Thyroid gland (tissue), 4 donors: ENCODE measurements at regions of chr7 and their contacts with region 1.

Region 1: DNA sequence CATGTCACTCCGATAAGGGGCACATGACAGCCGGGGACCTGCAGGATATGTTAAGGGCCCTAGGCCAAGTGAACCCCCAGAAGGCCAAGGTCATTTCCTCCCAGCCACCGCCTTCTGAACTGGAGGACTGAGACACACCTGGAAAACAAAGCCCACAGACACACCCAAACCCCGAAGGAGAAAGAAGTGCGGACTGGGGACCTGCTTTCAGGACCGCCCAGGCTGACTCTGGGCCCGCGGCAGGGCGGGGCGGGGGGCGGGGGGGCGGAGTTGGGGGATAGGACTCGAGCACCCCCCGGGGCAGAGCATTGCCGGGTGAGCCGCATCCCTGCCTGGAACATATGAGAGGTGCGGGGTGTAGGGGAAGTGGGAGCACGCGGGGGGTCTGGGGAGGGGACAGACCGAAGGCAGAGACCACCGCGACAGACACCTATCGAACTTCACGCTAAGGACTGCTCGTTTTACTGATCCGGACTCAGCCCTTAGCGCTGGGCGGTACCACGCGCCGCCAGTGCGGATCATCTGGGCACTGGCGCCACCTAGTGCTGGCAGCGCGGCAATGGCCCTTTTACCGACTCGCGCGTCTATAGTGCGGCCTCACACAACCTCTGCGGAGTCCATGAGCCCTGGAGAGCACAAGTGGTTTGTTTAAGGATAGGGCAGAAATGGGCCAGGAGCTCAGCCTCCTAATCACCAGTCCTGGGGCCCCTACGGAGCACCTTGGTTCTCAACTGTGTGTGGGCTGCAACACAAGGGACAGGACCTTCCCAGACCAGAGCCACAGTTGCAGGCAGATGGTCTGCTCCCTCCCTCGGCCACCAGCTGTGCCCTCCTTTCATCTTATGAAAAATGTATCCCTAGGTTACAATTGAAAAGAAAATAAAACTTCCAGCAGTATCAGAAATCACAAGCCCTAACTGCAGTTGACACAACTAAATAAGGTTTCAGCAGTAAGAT is 157.6 kb downstream of the HERPUD2 start:
- DNase-seq: peak; percentile 72 to 79
- H3K4me3 ChIP-seq: peak overlapping the region in 1 of 3 donors; percentile 23
- H3K27ac ChIP-seq: no peak overlapping the region
- H3K4me1 ChIP-seq: peaks cover 0 to 4% of the 10 kb centered on the region in 2 donors
- H3K27me3 ChIP-seq: no peaks in the 10 kb centered on the region
- CTCF ChIP-seq: peak; percentile 72 to 94 (median 83)
- POLR2A ChIP-seq: no peak

Region 2: GRCh38 chr7:35424869-35425495 is 112.4 kb before region 1 on chr7:
- intact Hi-C with region 1: loop called (anchors 10 kb)
- DNase-seq: peak; percentile 48 to 63
- H3K4me3 ChIP-seq: no peak overlapping the region
- H3K27ac ChIP-seq: no peak overlapping the region
- H3K4me1 ChIP-seq: no peaks in the 10 kb centered on the region
- H3K27me3 ChIP-seq: no peaks in the 10 kb centered on the region
- CTCF ChIP-seq: peak; percentile 23 to 83 (median 48)
- POLR2A ChIP-seq: no peak